ENCODE measurements at regions of chr9 and their contacts with region 1.

Region 1: GRCh38 chr9:684054-684890 is 157.2 kb upstream of the DMRT1 start:
- DNase-seq: no peak

Region 2: GRCh38 chr9:757246-757881 is 73.1 kb after region 1 on chr9:
- intact Hi-C with region 1: loop called (anchors 10 kb)
- DNase-seq: peak in 30 of 42 donors; percentile 18 to 80 (median 54)